ENCODE measurements at regions of chr2 and their contacts with region 1.

Region 1: GRCh38 chr2:78351208-78351607 is 674.3 kb upstream of the REG3G start:
- DNase-seq: no peak
- ATAC-seq: no peak
- H3K4me3 ChIP-seq: no peak overlapping the region
- H3K27ac ChIP-seq: no peak overlapping the region
- H3K4me1 ChIP-seq: no peaks in the 10 kb centered on the region
- H3K27me3 ChIP-seq: no peaks in the 10 kb centered on the region
- CTCF ChIP-seq: no peak
- EP300 ChIP-seq: no peak
- POLR2A ChIP-seq: no peak
- RAD21 ChIP-seq: no peak

Region 2: DNA sequence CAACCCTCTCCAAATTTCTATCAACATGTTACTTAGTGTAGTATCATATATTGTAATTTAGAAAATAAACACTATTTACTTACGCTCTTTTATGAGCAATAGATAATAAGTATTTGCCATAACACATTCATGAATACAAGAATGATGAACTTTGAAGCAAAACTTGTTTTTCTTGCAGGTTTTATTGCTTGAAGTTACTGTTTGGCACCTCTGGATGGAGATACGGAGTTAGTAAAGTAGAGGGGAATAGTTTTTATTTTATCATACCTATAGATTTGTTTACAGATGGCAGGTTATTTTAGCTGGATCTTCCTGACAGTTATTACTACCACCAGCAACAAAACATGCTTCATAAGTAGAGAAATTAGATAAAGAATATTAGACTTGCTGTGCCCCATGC is 554.8 kb before region 1 on chr2:
- CTCF ChIA-PET with region 1: no interaction called
- POLR2A ChIA-PET with region 1: no interaction called
- in situ Hi-C with region 1: no loop called
- intact Hi-C with region 1: no loop called
- DNase-seq: no peak
- ATAC-seq: no peak
- H3K4me3 ChIP-seq: no peak overlapping the region
- H3K27ac ChIP-seq: no peak overlapping the region
- H3K4me1 ChIP-seq: no peaks in the 10 kb centered on the region
- H3K27me3 ChIP-seq: no peaks in the 10 kb centered on the region
- CTCF ChIP-seq: no peak
- EP300 ChIP-seq: no peak
- POLR2A ChIP-seq: no peak
- RAD21 ChIP-seq: no peak

Region 3: GRCh38 chr2:78861546-78861945 is 510.3 kb after region 1 on chr2:
- CTCF ChIA-PET with region 1: no interaction called
- POLR2A ChIA-PET with region 1: no interaction called
- in situ Hi-C with region 1: no loop called
- intact Hi-C with region 1: loop called (anchors 5 kb)
- DNase-seq: peak; percentile 51
- ATAC-seq: peak; percentile 94
- H3K4me3 ChIP-seq: no peak overlapping the region
- H3K27ac ChIP-seq: no peak overlapping the region
- H3K4me1 ChIP-seq: no peaks in the 10 kb centered on the region
- H3K27me3 ChIP-seq: 0 out of 5 replicates have a peak, but pooled peaks cover 0 to 3% of the 10 kb centered on the region in 2 experiments
- CTCF ChIP-seq: peak; percentile 71
- EP300 ChIP-seq: no peak
- POLR2A ChIP-seq: no peak
- RAD21 ChIP-seq: peak; percentile 32; the same call in 1 of the 2 replicates

Region 4: GRCh38 chr2:78979380-78980151 is 628.4 kb after region 1 on chr2:
- CTCF ChIA-PET with region 1: no interaction called
- POLR2A ChIA-PET with region 1: no interaction called
- in situ Hi-C with region 1: loop called (anchors 25 kb)
- intact Hi-C with region 1: no loop called
- DNase-seq: peak; percentile 53
- ATAC-seq: peak; percentile 95
- H3K4me3 ChIP-seq: no peak overlapping the region
- H3K27ac ChIP-seq: no peak overlapping the region
- H3K4me1 ChIP-seq: no peaks in the 10 kb centered on the region
- H3K27me3 ChIP-seq: no peaks in the 10 kb centered on the region
- CTCF ChIP-seq: peak; percentile 89
- EP300 ChIP-seq: no peak
- POLR2A ChIP-seq: no peak
- RAD21 ChIP-seq: peak; percentile 83